BJ (cell line): ENCODE measurements at regions of chr1 and their contacts with region 1.

Region 1: GRCh38 chr1:150532868-150533302 is 16.3 kb upstream of the ADAMTSL4 start:
- DNase-seq: no peak
- H3K4me3 ChIP-seq: no peak overlapping the region
- H3K27me3 ChIP-seq: no peaks in the 10 kb centered on the region
- CTCF ChIP-seq: no peak

Region 2: GRCh38 chr1:150406483-150406882 is 126.4 kb before region 1 on chr1:
- CTCF ChIA-PET with region 1: no interaction called
- POLR2A ChIA-PET with region 1: no interaction called
- DNase-seq: no peak
- H3K4me3 ChIP-seq: no peak overlapping the region
- H3K27me3 ChIP-seq: no peaks in the 10 kb centered on the region
- CTCF ChIP-seq: no peak

Region 3: DNA sequence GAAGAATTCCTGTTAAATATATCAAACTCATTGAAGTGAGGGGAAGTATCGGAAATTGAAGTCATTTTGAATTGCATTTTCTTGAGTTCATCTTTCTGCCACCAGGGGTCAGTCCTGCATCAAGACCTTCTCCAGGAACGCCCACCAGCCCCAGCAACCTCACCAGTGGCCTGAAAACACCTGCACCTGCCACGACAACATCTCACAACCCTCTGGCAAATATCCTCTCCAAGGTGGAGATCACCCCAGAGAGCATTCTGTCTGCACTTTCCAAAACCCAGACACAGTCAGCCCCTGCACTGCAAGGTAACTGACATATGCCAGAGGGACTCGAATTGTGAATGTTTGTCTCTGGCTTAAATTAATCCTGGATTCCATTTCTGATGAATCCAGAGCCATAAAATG is 68.5 kb before region 1 on chr1:
- CTCF ChIA-PET with region 1: interaction called, 25 read pairs
- POLR2A ChIA-PET with region 1: no interaction called
- DNase-seq: no peak
- H3K4me3 ChIP-seq: no peak overlapping the region
- H3K27me3 ChIP-seq: no peaks in the 10 kb centered on the region
- CTCF ChIP-seq: peak; percentile 79

Region 4: GRCh38 chr1:150486964-150487762 is 45.7 kb before region 1 on chr1 and contains the start of gene TARS2:
- CTCF ChIA-PET with region 1: interaction called, 14 read pairs
- POLR2A ChIA-PET with region 1: no interaction called
- DNase-seq: peak; percentile 90
- H3K4me3 ChIP-seq: peak within 1 kb of the TSS; percentile 71
- H3K27me3 ChIP-seq: no peaks in the 10 kb centered on the region
- CTCF ChIP-seq: 0 out of 2 replicates have a peak, but pooled peaks have one; percentile 16
- polyA plus RNA-seq, gene TARS2: 12.6 and 17.7 TPM in 2 replicates

Region 5: DNA sequence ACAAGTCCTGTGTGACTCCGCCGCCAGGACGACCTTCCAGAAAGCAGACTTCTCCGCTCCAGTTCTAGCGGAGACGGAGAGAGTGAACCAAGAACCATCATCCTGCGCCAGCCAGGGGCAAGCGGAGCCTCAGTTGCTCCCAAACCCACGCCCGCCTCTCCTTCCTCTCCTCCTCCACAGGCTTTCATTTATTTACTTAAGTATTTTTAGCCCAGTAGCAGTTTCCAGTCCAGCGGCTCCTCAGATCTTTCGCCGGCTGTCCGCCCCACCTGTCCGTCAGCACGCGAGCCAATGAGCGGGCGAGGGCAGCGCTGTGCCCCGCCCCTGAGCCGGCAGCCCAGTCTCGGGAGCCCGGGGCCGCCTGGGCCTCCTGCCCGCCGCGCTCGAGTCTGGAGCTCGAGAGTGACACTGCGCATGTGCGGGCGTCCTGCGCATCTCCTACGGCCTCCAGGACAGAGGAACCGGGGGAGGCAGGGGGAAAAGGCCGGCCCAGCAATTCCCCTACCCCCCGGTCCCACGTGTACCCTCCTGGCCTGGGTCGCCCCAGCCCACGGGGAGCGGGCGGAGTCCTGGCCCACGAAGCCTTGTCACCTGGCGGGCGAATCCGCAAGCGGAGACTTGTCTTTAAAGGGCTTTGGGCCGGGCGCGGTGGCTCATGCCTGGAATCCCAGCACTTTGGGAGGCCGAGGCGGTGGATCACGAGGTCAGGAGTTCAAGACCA is 17.4 kb before region 1 on chr1 and contains the start of gene FALEC:
- CTCF ChIA-PET with region 1: interaction called, 37 read pairs
- POLR2A ChIA-PET with region 1: interaction called, 4 read pairs
- DNase-seq: peak; percentile 77
- H3K4me3 ChIP-seq: peak within 1 kb of the TSS; percentile 61
- H3K27me3 ChIP-seq: no peaks in the 10 kb centered on the region
- CTCF ChIP-seq: 0 out of 2 replicates have a peak, but pooled peaks have one; percentile 3
- polyA plus RNA-seq, gene FALEC: 0.17 TPM in 1 of 2 replicates, not detected in the other

Region 6: DNA sequence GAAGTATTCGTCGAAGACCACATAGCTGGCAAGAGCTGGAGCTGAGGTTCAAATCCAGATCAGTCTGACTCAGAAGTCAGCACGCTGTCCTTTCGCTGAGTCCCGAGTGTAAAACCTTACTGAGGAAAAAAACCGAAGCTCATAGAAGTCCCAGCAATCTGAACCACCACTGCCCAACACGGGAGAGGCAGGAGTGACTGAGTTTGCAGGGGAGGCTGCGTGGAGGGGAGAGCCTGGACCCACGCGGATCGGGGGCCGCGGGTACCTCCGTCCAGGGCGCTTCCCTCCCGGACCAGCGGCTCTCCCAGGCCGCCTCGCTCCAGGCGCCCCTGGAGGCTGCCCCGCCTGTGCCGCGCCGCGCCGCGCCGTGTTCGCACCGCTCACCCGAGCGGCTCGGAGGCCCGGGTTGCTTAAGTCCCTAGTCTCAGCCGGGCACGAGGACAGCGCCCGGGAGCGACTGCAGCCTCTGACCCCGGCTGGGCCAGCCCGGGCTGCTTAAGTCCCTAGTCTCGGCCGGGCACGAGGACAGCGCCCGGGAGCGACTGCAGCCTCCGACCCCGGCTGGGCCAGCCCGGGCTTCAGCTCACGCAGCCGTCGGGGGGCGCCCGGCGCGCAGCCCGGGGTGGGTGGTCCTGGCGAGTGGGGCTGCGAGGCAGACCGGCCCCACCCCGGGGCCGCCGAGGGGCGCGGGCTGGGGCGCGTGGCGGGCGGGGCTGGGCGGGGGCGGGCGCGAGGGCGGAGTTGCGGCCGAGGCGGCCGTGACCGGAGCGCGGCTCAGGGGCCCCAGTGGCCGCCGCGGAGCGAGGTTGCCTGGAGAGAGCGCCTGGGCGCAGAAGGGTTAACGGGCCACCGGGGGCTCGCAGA is 16.0 kb after region 1 on chr1 and contains the start of gene ADAMTSL4:
- CTCF ChIA-PET with region 1: interaction called, 21 read pairs
- POLR2A ChIA-PET with region 1: interaction called, 5 read pairs
- DNase-seq: no peak
- H3K4me3 ChIP-seq: peak within 1 kb of the TSS; percentile 52
- H3K27me3 ChIP-seq: no peaks in the 10 kb centered on the region
- CTCF ChIP-seq: 0 out of 2 replicates have a peak, but pooled peaks have one; percentile 2
- polyA plus RNA-seq, gene ADAMTSL4: 6.1 and 8.6 TPM in 2 replicates